Activated B cell treated with CpG ODN at 0.5 μM for 24 hours (primary cell): ENCODE measurements at regions of chr5 and their contacts with region 1.

Region 1: DNA sequence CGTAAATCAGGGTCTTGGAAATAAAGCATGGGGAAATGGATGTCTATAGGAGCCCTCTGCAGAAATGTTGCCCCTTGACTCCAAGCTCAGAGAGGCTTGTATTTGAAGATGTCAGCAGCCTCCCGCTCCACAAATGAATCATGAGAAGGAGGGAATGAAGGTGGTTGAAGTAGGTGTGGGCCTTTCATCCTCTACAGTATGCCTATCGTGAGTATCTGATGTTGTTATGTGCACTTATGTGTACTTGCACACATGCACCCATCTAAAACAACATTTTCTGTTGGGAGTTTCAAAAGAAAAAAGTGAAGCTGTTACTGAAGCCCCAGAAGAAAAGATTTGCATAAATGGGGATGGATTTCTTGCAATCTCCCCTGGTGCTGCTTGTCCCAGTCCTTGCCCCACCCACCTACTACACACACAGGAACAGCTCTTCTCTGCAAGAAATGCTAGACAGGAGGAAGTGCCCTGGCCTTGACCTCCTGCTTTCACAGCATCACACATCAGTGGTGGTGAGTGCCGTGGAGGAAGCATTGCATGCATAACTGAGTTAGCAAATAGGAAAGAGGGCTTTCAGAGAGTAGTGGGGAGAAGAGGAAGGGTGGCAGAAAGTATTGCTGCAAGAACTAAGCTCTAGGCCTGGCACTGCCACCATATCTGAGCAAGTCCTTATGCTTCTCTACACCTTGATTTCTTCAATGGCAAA is 156.1 kb downstream of the SNX18 start:
- DNase-seq: peak; percentile 29
- ATAC-seq: peak; percentile 90
- H3K4me3 Mint-ChIP-seq: no peak overlapping the region
- H3K27ac Mint-ChIP-seq: peak overlapping the region; percentile 16
- H3K4me1 Mint-ChIP-seq: peaks cover 80% of the 10 kb centered on the region
- H3K27me3 Mint-ChIP-seq: no peaks in the 10 kb centered on the region
- CTCF ChIP-seq: no peak

Region 2: GRCh38 chr5:54610197-54610944 is 63.3 kb before region 1 on chr5:
- CTCF ChIA-PET with region 1: no interaction called
- POLR2A ChIA-PET with region 1: interaction called, 5 read pairs
- intact Hi-C with region 1: loop called (anchors 1 kb)
- DNase-seq: no peak
- ATAC-seq: peak; percentile 94
- H3K4me3 Mint-ChIP-seq: peak overlapping the region; percentile 55
- H3K27ac Mint-ChIP-seq: peak overlapping the region; percentile 71
- H3K4me1 Mint-ChIP-seq: peaks cover 50% of the 10 kb centered on the region
- H3K27me3 Mint-ChIP-seq: no peaks in the 10 kb centered on the region
- CTCF ChIP-seq: no peak

Region 3: GRCh38 chr5:54693936-54694657 is 20.4 kb after region 1 on chr5:
- CTCF ChIA-PET with region 1: interaction called, 3 read pairs
- POLR2A ChIA-PET with region 1: interaction called, 9 read pairs
- intact Hi-C with region 1: loop called (anchors 2 kb)
- DNase-seq: no peak
- ATAC-seq: no peak
- H3K4me3 Mint-ChIP-seq: no peak overlapping the region
- H3K27ac Mint-ChIP-seq: no peak overlapping the region
- H3K4me1 Mint-ChIP-seq: peaks cover 37% of the 10 kb centered on the region
- H3K27me3 Mint-ChIP-seq: no peaks in the 10 kb centered on the region
- CTCF ChIP-seq: no peak

Region 4: DNA sequence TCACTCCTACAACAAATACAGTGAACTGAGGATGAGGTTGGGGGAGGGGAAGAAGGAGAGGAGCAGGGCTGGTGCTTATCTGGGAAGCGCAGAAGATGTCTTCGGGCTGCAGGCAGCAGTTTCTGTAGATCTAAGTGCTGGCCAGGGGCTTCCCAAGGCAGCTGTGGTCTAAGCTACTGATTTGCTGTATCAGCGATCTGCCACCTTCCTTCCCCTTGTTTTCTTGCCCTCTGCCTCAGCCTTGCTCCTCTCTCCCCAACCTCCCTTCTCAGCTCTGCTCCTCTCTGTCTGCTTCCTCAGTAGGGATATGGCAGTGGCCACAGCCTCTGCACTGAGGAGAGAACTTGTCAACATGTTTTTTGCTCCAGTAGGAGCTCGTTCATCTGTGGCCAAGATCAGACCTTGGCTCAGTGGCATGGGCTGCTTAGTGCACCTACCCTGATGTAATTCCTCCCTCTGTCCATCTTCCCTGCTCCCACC is 1363.9 kb after region 1 on chr5:
- CTCF ChIA-PET with region 1: no interaction called
- POLR2A ChIA-PET with region 1: no interaction called
- intact Hi-C with region 1: no loop called
- DNase-seq: no peak
- ATAC-seq: no peak
- H3K4me3 Mint-ChIP-seq: no peak overlapping the region
- H3K27ac Mint-ChIP-seq: no peak overlapping the region
- H3K4me1 Mint-ChIP-seq: no peaks in the 10 kb centered on the region
- H3K27me3 Mint-ChIP-seq: peaks cover 5% of the 10 kb centered on the region
- CTCF ChIP-seq: no peak